ENCODE measurements at regions of chr21 and their contacts with region 1.

Region 1: DNA sequence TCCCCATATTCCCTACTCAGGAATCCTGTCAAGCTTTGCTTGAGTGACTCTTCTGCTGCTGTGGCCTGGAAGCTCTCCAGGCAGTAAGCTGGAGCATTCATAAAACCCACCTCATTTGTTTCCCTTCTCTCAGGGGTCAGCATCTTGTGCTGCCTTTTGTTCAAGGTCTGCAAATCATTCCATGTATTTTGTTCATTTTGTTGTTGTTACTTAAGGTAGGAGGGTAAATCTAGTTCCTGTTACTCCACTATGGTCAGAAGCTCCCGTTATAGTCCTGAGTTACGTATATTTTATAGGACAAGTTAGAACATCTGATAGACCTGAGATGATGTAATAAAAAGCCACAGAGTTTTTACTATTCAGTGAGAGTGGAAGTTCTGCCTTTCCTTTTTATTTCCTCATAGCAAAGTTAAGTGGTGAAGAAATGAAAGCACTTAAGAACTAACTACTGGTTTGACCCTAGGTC is 9.9 kb downstream of the SYNJ1 start:
- DNase-seq: no peak
- H3K4me3 ChIP-seq: no peak overlapping the region
- CTCF ChIP-seq: no peak
- POLR2A ChIP-seq: no peak

Region 2: DNA sequence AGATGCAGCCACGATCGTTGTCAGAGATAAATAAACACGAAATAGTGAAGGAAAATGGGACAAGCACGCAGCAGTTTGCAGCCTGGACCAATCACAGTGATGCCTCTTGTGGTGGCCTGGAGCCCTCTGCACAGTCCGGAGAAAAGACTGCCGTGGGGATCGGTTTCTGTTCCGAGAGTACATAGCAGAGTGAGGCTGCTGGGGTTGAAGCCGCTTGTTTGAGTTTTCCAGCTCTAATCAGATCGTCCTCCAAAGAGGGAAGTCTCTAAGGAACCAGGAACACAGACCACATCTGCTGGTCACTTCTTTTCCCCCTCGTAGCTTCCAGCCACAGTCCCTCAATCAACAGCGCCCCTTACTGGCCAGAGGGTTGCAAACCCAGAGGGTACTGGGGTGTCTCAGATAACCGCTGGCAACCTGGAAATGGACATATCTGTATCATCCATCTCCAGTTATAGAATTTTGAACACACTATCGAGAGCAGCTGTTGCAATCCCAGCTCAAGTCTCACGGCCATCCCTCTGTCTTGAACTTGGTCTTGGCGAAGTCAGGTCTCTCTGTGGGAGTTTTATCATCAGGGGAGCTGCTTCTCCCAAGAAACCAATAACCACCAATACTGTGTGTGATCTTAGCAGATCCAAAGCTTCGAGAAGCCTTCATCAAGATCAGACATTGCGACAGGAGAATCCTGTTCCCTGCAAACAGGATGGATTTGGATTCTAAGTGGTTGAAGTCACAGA is 409.4 kb after region 1 on chr21:
- intact Hi-C with region 1: no loop called
- DNase-seq: peak; percentile 41 to 88
- H3K4me3 ChIP-seq: no peak overlapping the region
- CTCF ChIP-seq: no peak
- POLR2A ChIP-seq: no peak

Region 3: DNA sequence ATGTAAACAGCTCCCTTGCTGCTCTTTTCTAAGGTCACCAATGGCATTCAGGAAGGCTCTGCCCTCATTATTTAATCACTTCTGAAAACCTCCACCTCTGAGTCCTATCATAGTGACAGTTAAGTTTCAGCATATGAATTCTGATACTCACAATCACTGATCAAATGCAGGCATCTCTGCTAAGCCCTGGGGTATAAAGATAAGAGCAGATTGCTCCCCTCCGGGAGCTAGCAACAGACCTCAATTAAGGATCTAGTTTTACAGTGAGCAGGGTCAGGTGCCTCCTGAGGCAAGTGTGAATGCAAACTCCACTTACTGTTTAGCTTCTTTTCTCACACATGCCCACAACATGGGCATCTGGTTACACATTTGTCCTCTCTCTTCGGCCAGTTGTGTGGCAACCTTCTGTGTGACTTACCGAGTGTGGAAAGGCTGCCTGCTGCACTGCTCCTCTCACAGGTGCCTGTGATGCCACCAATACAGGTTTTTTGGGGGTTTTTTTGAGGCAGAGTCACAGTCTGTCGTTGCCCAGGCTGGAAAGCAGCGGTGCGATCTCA is 563.3 kb after region 1 on chr21:
- intact Hi-C with region 1: loop called (anchors 5 kb)
- DNase-seq: peak in 1 of 2 donors; percentile 10
- H3K4me3 ChIP-seq: no peak overlapping the region
- CTCF ChIP-seq: no peak
- POLR2A ChIP-seq: no peak